ENCODE measurements at regions of chr3 and their contacts with region 1.

Region 1: GRCh38 chr3:194315088-194315964 is 35.8 kb downstream of the CPN2 start:
- DNase-seq: peak; percentile 92
- CTCF ChIP-seq: peak; percentile 96

Region 2: DNA sequence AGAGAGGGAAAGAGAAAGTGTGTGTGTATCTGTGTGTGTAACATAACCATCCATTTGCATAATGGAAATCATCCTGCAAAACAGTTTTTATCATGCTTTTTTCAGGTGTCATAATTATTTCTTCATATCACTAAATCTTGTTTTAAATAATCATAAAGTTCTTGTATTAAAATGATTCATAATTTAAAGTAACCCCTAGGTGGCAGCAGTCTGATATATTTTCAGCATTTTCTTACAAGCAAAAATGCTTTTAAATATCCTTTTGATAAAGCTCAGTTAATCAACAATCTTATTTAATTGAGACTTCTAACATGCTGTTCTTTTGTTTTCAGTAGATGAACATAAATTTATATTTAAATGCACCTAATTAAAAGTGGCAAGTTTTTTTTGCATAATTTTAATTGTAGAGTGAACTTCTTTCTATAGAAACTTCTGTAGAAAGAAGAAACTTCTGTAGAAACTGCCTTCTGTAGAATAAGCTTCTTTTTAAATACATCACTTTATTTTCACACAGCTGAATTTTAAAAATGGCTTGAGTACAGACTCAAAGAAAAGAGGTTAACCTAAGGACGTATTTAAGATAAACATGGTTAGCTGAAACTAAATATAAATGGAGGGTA is 649.8 kb before region 1 on chr3:
- in situ Hi-C with region 1: loop called (anchors 25 kb)
- DNase-seq: no peak
- CTCF ChIP-seq: peak; percentile 15

Region 3: DNA sequence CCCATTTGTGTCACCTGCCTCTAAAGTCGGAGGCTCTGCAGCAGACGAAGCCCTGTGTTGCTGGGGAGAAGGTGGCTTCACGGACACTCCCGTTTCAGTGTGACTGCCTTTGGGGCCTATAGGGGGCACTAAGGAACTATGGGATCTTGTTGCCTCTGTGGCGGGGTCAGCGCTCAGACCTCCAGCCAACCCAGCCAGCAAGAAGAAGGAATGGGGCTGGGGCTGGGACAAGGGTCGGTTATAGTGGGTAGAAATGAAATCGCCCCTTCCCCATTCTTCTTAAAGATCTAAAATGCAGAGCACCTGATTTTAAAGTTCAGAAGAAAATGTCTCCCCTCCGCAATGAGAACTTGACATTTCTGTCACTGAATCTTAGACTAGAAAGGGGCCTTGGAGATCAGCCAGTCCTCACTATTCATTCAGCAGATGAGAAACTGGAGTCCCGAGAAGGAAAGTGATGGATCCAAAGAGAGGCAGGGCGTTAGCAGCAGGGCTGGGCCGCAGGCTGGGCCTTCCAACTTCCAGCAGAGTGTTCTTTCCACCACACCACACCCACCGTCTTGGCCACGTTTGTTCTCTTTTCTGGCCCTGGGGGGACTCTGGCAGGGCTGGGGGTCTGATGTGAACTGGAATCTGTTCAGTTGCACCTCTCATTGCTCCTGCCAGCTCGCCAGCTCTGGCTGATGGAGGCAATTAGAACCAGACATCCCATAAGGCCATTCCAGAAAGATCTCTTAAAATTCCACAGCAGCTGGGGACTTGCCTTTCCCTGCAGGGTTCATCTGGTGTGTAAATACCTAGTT is 526.9 kb before region 1 on chr3:
- in situ Hi-C with region 1: loop called (anchors 5 kb)
- DNase-seq: peak; percentile 86
- CTCF ChIP-seq: peak; percentile 67

Region 4: GRCh38 chr3:193971261-193971751 is 344.0 kb before region 1 on chr3:
- in situ Hi-C with region 1: loop called (anchors 25 kb)
- DNase-seq: peak; percentile 67
- CTCF ChIP-seq: no peak

Region 5: GRCh38 chr3:194134757-194135528 is 180.4 kb before region 1 on chr3:
- in situ Hi-C with region 1: loop called (anchors 10 kb)
- DNase-seq: peak; percentile 84
- CTCF ChIP-seq: no peak

Measured in GM13976 (cell line).